Heart left ventricle (tissue), 16 donors: ENCODE measurements at regions of chr1 and their contacts with region 1.

Region 1: GRCh38 chr1:52365746-52366516 is at the start of gene CC2D1B:
- DNase-seq: peak; percentile 98 to 100 (median 99)
- ATAC-seq: peak; percentile 95 to 97 (median 96)
- H3K4me3 ChIP-seq: peak within 1 kb of the TSS; percentile 74 to 99 (median 94)
- H3K27ac ChIP-seq: peak within 1 kb of the TSS; percentile 70 to 97 (median 93)
- H3K4me1 ChIP-seq: peaks cover 0 to 29% (median 11%) of the 10 kb centered on the region in 12 donors
- H3K27me3 ChIP-seq: no peaks in the 10 kb centered on the region
- CTCF ChIP-seq: peak in 7 of 12 donors; percentile 8 to 27 (median 23)
- POLR2A ChIP-seq: peak in 1 of 2 donors; percentile 92
- total RNA-seq, gene CC2D1B: 12.8 to 25.2 (median 16.7) TPM

Region 2: GRCh38 chr1:52098139-52098871 is 267.6 kb before region 1 on chr1:
- intact Hi-C with region 1: no loop called
- DNase-seq: no peak
- ATAC-seq: no peak
- H3K4me3 ChIP-seq: no peak overlapping the region
- H3K27ac ChIP-seq: no peak overlapping the region
- H3K4me1 ChIP-seq: no peaks in the 10 kb centered on the region
- H3K27me3 ChIP-seq: no peaks in the 10 kb centered on the region
- CTCF ChIP-seq: no peak
- POLR2A ChIP-seq: no peak

Region 3: DNA sequence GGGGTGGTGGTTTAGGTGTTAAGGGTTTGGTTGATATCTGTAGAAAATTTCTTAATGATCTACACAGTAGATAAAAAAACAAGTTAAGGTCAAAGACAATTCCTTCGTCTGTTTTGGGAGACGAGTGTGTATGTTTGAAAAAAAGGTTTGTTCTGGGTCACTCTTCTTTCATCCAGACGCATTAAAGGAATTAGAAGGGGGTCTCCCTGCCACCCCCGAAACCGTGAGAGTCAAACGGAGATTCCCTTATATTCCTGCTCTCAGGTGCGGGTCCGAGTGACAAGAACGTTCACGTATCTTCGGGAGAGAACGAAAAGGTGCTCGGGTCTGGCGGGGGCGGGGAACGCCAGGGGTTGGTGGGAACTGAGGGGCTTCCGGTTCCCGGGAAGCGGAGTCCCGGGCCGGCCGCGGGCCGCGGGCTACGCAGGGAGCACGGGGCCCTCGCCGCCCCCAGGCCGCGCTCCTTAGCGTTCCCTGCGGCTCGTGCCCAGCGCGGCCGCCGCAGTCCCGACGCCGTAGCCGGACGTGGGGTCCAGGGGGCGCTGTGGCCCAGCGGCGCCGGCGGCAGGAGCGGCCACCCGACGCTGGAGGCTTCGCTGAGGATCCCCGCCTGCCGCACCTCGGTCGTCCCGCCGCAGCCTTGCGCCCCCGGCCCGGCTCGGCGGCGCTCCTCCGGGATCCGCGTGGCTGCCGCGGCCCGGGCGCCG is 224.3 kb before region 1 on chr1 and contains the start of gene ZFYVE9:
- intact Hi-C with region 1: loop called in 1 of 10 experiments (anchors 10 kb)
- DNase-seq: peak; percentile 75 to 90 (median 81)
- ATAC-seq: peak; percentile 76 to 97 (median 96)
- H3K4me3 ChIP-seq: peak within 1 kb of the TSS; percentile 48 to 99 (median 89)
- H3K27ac ChIP-seq: peak within 1 kb of the TSS; percentile 87 to 98 (median 94)
- H3K4me1 ChIP-seq: peaks cover 0 to 39% (median 14%) of the 10 kb centered on the region in 12 donors
- H3K27me3 ChIP-seq: peaks cover 0 to 11% (median 0%) of the 10 kb centered on the region in 9 donors
- CTCF ChIP-seq: peak; percentile 34 to 93 (median 70)
- POLR2A ChIP-seq: peak in 1 of 2 donors; percentile 27
- total RNA-seq, gene ZFYVE9: 12.6 to 19.2 (median 17.3) TPM

Region 4: DNA sequence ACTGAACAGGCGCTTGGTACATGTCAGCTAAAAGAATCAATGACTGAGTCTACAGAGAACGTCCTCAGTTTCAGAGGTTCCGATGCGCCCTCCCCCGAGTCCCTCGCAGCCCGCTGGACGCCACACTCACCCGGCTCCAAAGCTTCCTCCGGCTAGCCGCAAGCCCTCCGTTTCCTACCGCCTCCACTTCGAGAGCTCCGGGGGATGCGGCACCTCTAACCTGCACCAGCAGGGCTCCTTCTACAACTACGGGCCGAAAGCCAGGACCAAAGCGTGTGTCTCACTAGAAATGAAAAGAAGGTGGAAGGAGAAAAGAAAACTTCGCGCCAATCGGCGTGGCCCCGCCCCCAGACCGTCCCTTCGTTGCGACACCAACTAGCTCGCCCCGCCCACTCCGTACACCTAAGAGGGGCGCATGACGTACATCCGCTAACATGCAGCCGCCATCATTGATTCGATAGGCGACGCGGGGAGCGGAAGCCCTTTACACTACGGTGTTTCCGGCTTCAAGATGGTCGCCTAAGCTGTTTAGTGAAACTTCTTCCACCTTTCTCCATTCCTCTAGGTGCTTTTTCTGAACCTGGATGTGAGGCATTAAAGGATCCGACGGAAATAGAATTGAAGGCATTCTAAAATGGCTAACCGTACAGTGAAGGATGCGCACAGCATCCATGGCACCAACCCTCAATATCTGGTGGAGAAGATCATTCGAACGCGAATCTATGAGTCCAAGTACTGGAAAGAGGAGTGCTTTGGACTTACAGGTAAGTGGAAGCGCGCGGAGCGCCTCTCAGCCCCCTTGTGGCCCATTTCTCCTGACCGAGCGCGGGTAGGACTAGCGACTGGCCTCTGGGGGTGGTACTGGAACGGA is 38.4 kb after region 1 on chr1 and contains the starts of genes ORC1 and PRPF38A:
- intact Hi-C with region 1: loop called in 4 of 10 experiments (anchors 2 to 5 kb)
- DNase-seq: peak; percentile 96 to 98 (median 97)
- ATAC-seq: peak; percentile 100
- H3K4me3 ChIP-seq: peak within 1 kb of the TSS; percentile 64 to 96 (median 88)
- H3K27ac ChIP-seq: peak within 1 kb of the TSS; percentile 65 to 94 (median 85)
- H3K4me1 ChIP-seq: peaks cover 0 to 31% (median 18%) of the 10 kb centered on the region in 12 donors
- H3K27me3 ChIP-seq: no peaks in the 10 kb centered on the region
- CTCF ChIP-seq: peak in 11 of 12 donors; percentile 12 to 54 (median 42)
- POLR2A ChIP-seq: peak in 1 of 2 donors; percentile 48
- total RNA-seq, gene ORC1: 0.09 to 1.4 (median 0.16) TPM in 6 of 9 donors, not detected in the others
- total RNA-seq, gene PRPF38A: 6.6 to 24.7 (median 16.6) TPM

Region 5: GRCh38 chr1:52474807-52475206 is 108.9 kb after region 1 on chr1:
- intact Hi-C with region 1: no loop called
- DNase-seq: no peak
- ATAC-seq: no peak
- H3K4me3 ChIP-seq: no peak overlapping the region
- H3K27ac ChIP-seq: no peak overlapping the region
- H3K4me1 ChIP-seq: peaks cover 0 to 7% (median 0%) of the 10 kb centered on the region in 12 donors
- H3K27me3 ChIP-seq: no peaks in the 10 kb centered on the region
- CTCF ChIP-seq: no peak
- POLR2A ChIP-seq: no peak